ENCODE measurements at regions of chr1 and their contacts with region 1.

Region 1: GRCh38 chr1:118247593-118247992 is 62.6 kb upstream of the SPAG17 start:
- DNase-seq: no peak
- H3K4me3 ChIP-seq: no peak overlapping the region
- H3K27ac ChIP-seq: no peak overlapping the region
- H3K4me1 ChIP-seq: peaks cover 3 to 16% (median 10%) of the 10 kb centered on the region in 4 experiments; a peak in 5 of 7 replicates
- H3K27me3 ChIP-seq: no peaks in the 10 kb centered on the region
- CTCF ChIP-seq: peak in 2 of 3 experiments; percentile 44 to 69; a peak in 3 of 4 replicates
- EP300 ChIP-seq: no peak
- POLR2A ChIP-seq: no peak
- RAD21 ChIP-seq: peak; percentile 52 to 54

Region 2: DNA sequence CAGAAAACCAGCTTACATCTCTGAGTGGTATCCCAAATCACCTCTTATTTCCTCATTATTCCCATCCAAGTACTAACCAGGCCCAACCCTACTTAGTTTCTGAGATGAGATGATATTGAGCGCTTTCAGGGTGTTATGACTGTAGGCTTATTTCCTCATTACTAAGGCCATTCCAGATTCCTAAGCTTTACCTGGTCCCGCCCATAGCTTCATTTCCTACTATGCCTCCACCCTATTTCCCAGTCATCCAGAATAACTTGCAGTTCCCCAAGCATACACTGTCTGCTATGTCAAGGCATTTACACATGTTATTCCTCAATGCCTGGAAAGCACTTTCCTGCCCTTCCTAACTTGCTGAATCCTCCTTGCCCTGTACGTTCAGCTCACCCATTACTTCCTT is 16.8 kb after region 1 on chr1:
- CTCF ChIA-PET with region 1: interaction called, 16 read pairs
- POLR2A ChIA-PET with region 1: no interaction called
- DNase-seq: no peak
- H3K4me3 ChIP-seq: no peak overlapping the region
- H3K27ac ChIP-seq: no peak overlapping the region
- H3K4me1 ChIP-seq: no peaks in the 10 kb centered on the region
- H3K27me3 ChIP-seq: no peaks in the 10 kb centered on the region
- CTCF ChIP-seq: no peak
- EP300 ChIP-seq: no peak
- POLR2A ChIP-seq: no peak
- RAD21 ChIP-seq: no peak

Measured in H1 (cell line).